ENCODE measurements at regions of chr2 and their contacts with region 1.

Region 1: DNA sequence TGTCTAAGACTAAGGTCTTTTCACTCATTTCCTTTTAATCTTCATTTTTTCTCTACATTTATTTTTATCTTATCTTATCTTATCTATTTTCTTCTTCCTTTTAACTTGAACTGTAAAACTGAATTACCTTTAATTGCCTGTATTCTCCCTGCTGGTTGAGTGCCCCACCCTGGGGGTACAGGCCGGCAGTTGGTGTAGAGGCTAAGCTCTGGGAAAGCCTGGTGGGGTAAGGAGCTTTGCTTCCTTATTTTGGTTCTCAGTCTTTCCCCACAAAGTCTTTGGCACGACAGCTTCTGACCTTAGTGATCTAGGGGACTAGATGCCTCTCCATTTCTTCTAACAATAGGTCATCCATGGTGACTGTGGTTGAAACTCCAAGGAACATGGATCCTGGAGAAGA is 26.8 kb upstream of the HAAO start:
- DNase-seq: no peak
- ATAC-seq: no peak
- H3K4me3 ChIP-seq: no peak overlapping the region
- H3K4me3 Mint-ChIP-seq: no peak overlapping the region
- H3K27ac ChIP-seq: no peak overlapping the region
- H3K27ac Mint-ChIP-seq: no peak overlapping the region
- H3K4me1 ChIP-seq: no peaks in the 10 kb centered on the region
- H3K4me1 Mint-ChIP-seq: no peaks in the 10 kb centered on the region
- H3K27me3 ChIP-seq: no peaks in the 10 kb centered on the region
- H3K27me3 Mint-ChIP-seq: no peaks in the 10 kb centered on the region
- CTCF ChIP-seq: no peak

Region 2: DNA sequence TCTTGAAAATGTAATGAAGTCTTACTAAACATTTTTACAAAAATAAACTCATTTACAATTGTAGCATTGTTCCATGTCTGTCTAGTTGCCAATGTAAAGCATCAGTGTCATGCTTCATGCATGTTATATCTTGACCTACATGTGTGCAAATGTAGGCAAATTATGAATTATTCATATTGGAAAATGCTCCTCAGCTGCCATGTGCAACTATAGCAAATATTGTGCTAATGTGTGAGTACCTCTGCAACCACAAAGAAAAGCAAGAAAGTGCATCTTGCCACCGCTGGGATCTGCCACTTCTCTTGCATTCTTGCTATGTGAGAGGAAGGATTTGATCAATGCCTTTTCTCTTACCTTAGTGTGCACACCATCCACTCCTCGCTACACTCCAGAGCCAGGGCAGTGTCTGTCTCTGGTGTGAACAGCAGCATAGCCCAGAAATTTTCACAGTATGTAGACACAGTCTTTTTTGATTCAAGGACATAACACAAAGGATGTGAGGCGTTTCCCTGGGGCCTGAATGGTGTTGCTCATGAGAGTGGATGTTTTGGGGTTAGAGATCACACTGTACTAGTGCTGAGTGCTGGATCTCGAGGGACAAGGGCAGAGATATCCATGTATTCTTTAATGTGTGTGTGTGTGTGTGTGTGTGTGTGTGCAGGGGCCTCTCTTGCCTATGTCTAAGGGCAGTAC is 20.8 kb after region 1 on chr2:
- CTCF ChIA-PET with region 1: no interaction called
- POLR2A ChIA-PET with region 1: no interaction called
- intact Hi-C with region 1: no loop called
- DNase-seq: peak in 1 of 9 experiments; percentile 9
- ATAC-seq: no peak
- H3K4me3 ChIP-seq: no peak overlapping the region
- H3K4me3 Mint-ChIP-seq: no peak overlapping the region
- H3K27ac ChIP-seq: no peak overlapping the region
- H3K27ac Mint-ChIP-seq: no peak overlapping the region
- H3K4me1 ChIP-seq: no peaks in the 10 kb centered on the region
- H3K4me1 Mint-ChIP-seq: no peaks in the 10 kb centered on the region
- H3K27me3 ChIP-seq: no peaks in the 10 kb centered on the region
- H3K27me3 Mint-ChIP-seq: no peaks in the 10 kb centered on the region
- CTCF ChIP-seq: no peak

Region 3: GRCh38 chr2:43239981-43240761 is 421.0 kb after region 1 on chr2:
- CTCF ChIA-PET with region 1: no interaction called
- POLR2A ChIA-PET with region 1: no interaction called
- intact Hi-C with region 1: loop called in 1 of 2 experiments (anchors 5 kb)
- DNase-seq: no peak
- ATAC-seq: no peak
- H3K4me3 ChIP-seq: no peak overlapping the region
- H3K4me3 Mint-ChIP-seq: no peak overlapping the region
- H3K27ac ChIP-seq: no peak overlapping the region
- H3K27ac Mint-ChIP-seq: peak overlapping the region; percentile 9
- H3K4me1 ChIP-seq: no peaks in the 10 kb centered on the region
- H3K4me1 Mint-ChIP-seq: peaks cover 11% of the 10 kb centered on the region
- H3K27me3 ChIP-seq: no peaks in the 10 kb centered on the region
- H3K27me3 Mint-ChIP-seq: no peaks in the 10 kb centered on the region
- CTCF ChIP-seq: no peak

Measured in CD8-positive, alpha-beta T cell (primary cell).